Heart right ventricle (tissue), 16 donors: ENCODE measurements at regions of chr10 and their contacts with region 1.

Region 1: GRCh38 chr10:63465293-63466143 is at the start of gene JMJD1C:
- DNase-seq: peak; percentile 76 to 84
- ATAC-seq: peak; percentile 91 to 97 (median 94)
- H3K4me3 ChIP-seq: peak within 1 kb of the TSS; percentile 77 to 86 (median 84)
- H3K27ac ChIP-seq: peak within 1 kb of the TSS; percentile 73 to 97 (median 93)
- H3K4me1 ChIP-seq: peaks cover 0 to 40% (median 28%) of the 10 kb centered on the region in 9 donors
- H3K27me3 ChIP-seq: no peaks in the 10 kb centered on the region
- CTCF ChIP-seq: peak in 1 of 9 donors; percentile 9
- total RNA-seq, gene JMJD1C: 30.9 to 51.9 (median 39.2) TPM

Region 2: DNA sequence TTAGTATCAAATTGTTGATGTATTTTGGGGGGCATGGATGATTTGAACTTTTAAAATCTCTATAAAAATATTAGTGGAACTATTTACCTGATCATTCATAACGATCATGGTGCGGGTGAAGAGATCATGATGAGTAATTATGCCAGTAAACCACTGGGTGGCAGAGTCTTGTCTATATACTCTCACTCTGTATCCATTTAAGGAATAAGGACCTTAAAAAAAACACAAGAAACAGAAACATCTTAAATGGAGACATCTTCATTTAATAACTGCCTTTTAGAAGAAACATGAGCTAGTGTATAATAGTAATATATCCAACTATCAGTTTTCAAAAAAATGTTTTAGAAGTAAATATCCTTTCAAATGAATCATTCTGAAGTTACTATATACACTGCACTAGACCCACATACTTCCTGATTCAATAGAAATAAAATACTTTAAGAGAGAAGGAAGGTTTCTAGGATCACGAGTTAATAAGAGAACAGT is 248.4 kb before region 1 on chr10:
- intact Hi-C with region 1: loop called in 6 of 10 experiments (anchors 5 to 10 kb)
- DNase-seq: peak in 1 of 2 donors; percentile 30
- ATAC-seq: peak; percentile 62 to 82 (median 77)
- H3K4me3 ChIP-seq: no peak overlapping the region
- H3K27ac ChIP-seq: peak overlapping the region in 4 of 10 donors; percentile 1 to 40 (median 14)
- H3K4me1 ChIP-seq: peaks cover 0 to 63% (median 43%) of the 10 kb centered on the region in 9 donors
- H3K27me3 ChIP-seq: no peaks in the 10 kb centered on the region
- CTCF ChIP-seq: peak; percentile 46 to 86 (median 70)

Region 3: GRCh38 chr10:63375859-63376258 is 89.7 kb before region 1 on chr10:
- intact Hi-C with region 1: loop called in 1 of 10 experiments (anchors 1 kb)
- DNase-seq: no peak
- ATAC-seq: peak in 2 of 8 donors; percentile 37 to 58
- H3K4me3 ChIP-seq: no peak overlapping the region
- H3K27ac ChIP-seq: peak overlapping the region in 1 of 10 donors; percentile 8
- H3K4me1 ChIP-seq: peaks cover 0 to 44% (median 5%) of the 10 kb centered on the region in 9 donors
- H3K27me3 ChIP-seq: no peaks in the 10 kb centered on the region
- CTCF ChIP-seq: no peak

Region 4: DNA sequence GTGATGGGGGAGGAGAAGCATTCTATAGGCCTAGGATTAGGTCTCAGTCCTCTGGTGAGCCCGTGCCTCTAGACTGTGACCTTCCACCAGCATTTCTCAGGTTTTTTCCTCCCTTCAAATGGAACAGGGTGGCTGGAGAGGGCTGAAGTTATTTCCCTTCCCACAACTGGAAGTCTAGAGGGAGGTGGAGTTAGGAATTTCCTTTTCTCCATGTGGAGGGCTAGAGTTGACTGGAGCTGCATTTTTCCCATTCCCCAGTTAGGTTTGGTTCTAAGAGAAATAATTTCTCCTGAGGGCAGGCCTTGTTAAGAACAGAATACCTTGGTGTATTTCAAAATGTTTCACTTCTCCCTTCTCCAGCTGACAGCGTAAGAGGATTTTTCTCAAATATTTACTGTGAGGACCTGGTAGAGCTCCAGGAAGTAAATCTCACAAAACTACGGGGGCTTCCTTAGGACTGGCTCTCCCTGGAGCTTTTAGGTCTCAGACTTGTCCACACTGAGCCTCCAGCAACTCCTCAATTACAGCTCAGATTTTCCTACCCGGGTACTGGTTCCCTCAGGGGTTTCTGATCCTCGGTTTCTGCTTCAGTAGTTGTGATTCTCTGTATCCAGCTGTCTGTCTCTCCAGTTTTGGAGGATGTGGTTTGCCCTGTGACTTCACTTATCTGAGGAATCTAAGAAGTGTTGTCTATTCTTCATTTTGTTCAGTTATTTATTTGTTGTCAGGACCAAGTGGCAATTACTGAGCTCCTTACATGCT is 49.7 kb after region 1 on chr10:
- intact Hi-C with region 1: loop called in 6 of 10 experiments (anchors 5 to 10 kb)
- DNase-seq: peak in 1 of 2 donors; percentile 32
- ATAC-seq: peak; percentile 12 to 89 (median 68)
- H3K4me3 ChIP-seq: peak overlapping the region in 1 of 10 donors; percentile 7
- H3K27ac ChIP-seq: peak overlapping the region in 9 of 10 donors; percentile 29 to 87 (median 71)
- H3K4me1 ChIP-seq: peaks cover 0 to 59% (median 50%) of the 10 kb centered on the region in 9 donors
- H3K27me3 ChIP-seq: no peaks in the 10 kb centered on the region
- CTCF ChIP-seq: no peak

Region 5: GRCh38 chr10:63521416-63522276 is 56.1 kb after region 1 on chr10:
- intact Hi-C with region 1: loop called in 7 of 10 experiments (anchors 1 to 10 kb)
- DNase-seq: peak; percentile 68 to 72
- ATAC-seq: peak; percentile 70 to 91 (median 86)
- H3K4me3 ChIP-seq: peak overlapping the region; percentile 51 to 91 (median 80)
- H3K27ac ChIP-seq: peak overlapping the region; percentile 97 to 99 (median 99)
- H3K4me1 ChIP-seq: peaks cover 0 to 80% (median 58%) of the 10 kb centered on the region in 9 donors
- H3K27me3 ChIP-seq: no peaks in the 10 kb centered on the region
- CTCF ChIP-seq: no peak

Region 6: DNA sequence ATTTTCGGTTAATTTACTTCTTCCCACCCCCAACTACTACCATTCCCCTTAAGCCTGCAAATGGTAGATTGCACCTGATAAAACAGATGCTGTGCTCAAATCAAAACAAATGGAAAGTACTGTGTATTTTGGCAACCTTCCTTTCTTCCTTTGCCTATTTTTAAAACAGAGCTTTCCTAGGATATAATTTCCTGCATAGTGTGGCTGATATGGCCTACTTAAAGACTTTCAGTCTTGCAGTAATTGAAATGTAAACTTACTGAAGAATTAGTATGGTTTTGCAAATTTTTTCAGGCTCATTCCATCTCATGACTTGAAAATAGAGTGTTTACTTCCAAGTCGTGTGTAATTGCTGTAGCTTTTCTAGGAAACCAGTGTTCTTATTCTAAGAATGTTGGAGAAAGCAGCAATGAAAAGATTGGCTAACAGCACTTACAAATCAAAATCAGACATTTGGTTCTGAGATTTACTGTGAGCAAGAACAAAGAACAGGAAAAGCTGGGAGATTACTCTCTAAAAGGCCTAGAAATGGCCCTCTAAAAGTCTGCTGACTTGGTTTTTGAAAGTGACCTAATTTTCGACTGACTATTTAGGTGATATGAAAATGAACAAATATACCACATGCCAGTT is 107.7 kb after region 1 on chr10:
- intact Hi-C with region 1: no loop called
- DNase-seq: no peak
- ATAC-seq: peak in 7 of 8 donors; percentile 27 to 74 (median 67)
- H3K4me3 ChIP-seq: peak overlapping the region in 1 of 10 donors; percentile 10
- H3K27ac ChIP-seq: peak overlapping the region; percentile 13 to 74 (median 52)
- H3K4me1 ChIP-seq: peaks cover 13 to 54% (median 42%) of the 10 kb centered on the region in 9 donors
- H3K27me3 ChIP-seq: no peaks in the 10 kb centered on the region
- CTCF ChIP-seq: no peak

Region 7: GRCh38 chr10:63595072-63595471 is 129.6 kb after region 1 on chr10:
- intact Hi-C with region 1: no loop called
- DNase-seq: peak in 1 of 2 donors; percentile 64
- ATAC-seq: peak; percentile 76 to 95 (median 86)
- H3K4me3 ChIP-seq: no peak overlapping the region
- H3K27ac ChIP-seq: peak overlapping the region in 4 of 10 donors; percentile 41 to 50 (median 44)
- H3K4me1 ChIP-seq: peaks cover 0 to 34% (median 18%) of the 10 kb centered on the region in 9 donors
- H3K27me3 ChIP-seq: no peaks in the 10 kb centered on the region
- CTCF ChIP-seq: peak in 7 of 9 donors; percentile 13 to 45 (median 26)

Region 8: GRCh38 chr10:63657761-63658160 is 192.2 kb after region 1 on chr10:
- intact Hi-C with region 1: no loop called
- DNase-seq: no peak
- ATAC-seq: no peak
- H3K4me3 ChIP-seq: no peak overlapping the region
- H3K27ac ChIP-seq: no peak overlapping the region
- H3K4me1 ChIP-seq: peaks cover 0 to 4% (median 0%) of the 10 kb centered on the region in 9 donors
- H3K27me3 ChIP-seq: no peaks in the 10 kb centered on the region
- CTCF ChIP-seq: no peak